ENCODE measurements at regions of chr11 and their contacts with region 1.

Region 1: GRCh38 chr11:105862736-105863367 is 159.2 kb downstream of the MSANTD4 start:
- ATAC-seq: peak; percentile 59 to 82 (median 76)
- H3K4me3 ChIP-seq: no peak overlapping the region
- H3K27ac ChIP-seq: no peak overlapping the region
- H3K4me1 ChIP-seq: peaks cover 0 to 8% of the 10 kb centered on the region in 2 donors

Region 2: DNA sequence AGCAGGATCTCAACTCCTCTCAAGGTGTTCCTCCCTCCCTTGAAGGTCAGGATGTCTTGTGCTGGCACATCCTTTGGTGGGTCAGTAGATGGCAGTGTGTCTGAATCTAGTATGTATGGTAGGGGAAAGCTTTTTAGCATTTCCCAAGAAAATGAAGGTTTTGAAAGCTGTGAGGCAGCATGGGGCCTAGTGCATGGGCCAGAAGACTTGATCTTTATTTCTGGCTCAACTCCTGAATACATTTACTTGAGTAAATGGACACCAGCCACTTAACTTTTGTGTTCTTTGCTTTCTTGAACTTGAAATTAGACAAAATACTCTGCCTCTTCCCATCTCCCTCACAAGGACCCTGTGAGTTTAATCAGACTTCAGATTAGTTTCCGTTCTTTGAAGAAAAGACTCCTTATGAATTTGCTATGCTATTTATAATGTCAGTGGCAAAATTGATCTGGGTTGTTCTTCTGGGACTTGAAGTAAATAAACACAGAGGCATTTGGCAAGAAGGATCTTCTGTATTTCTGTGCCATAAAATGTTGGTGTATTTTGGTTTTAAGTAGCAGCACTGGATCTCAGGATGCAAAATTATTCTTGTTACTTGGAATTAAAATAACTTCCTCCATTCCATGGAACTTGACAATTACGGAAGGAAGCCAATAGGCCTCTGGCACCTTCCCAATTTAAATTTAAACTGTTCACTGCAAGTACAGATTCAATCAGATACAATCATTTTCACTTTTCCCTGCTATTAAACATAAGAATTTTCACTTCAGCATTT is 1253.4 kb before region 1 on chr11:
- in situ Hi-C with region 1: loop called in 1 of 9 experiments (anchors 25 kb)
- ATAC-seq: peak; percentile 63 to 100 (median 88)
- H3K4me3 ChIP-seq: no peak overlapping the region
- H3K27ac ChIP-seq: no peak overlapping the region
- H3K4me1 ChIP-seq: peaks cover 4 to 9% of the 10 kb centered on the region in 2 donors

Region 3: GRCh38 chr11:104968355-104968855 is 894.4 kb before region 1 on chr11 and contains the start of gene CASP4:
- in situ Hi-C with region 1: loop called in 1 of 9 experiments (anchors 25 kb)
- ATAC-seq: peak in 3 of 8 experiments; percentile 83 to 87 (median 84)
- H3K4me3 ChIP-seq: no peak within 1 kb of the TSS
- H3K27ac ChIP-seq: no peak within 1 kb of the TSS
- H3K4me1 ChIP-seq: no peaks in the 10 kb centered on the region
- total RNA-seq, gene CASP4: 0.18 to 104 (median 8.6) TPM in 7 of 8 experiments, not detected in the other

Region 4: GRCh38 chr11:105177658-105178057 is 685.2 kb before region 1 on chr11:
- in situ Hi-C with region 1: no loop called
- ATAC-seq: peak in 2 of 8 experiments; percentile 52 to 61
- H3K4me3 ChIP-seq: no peak overlapping the region
- H3K27ac ChIP-seq: no peak overlapping the region
- H3K4me1 ChIP-seq: no peaks in the 10 kb centered on the region

Region 5: DNA sequence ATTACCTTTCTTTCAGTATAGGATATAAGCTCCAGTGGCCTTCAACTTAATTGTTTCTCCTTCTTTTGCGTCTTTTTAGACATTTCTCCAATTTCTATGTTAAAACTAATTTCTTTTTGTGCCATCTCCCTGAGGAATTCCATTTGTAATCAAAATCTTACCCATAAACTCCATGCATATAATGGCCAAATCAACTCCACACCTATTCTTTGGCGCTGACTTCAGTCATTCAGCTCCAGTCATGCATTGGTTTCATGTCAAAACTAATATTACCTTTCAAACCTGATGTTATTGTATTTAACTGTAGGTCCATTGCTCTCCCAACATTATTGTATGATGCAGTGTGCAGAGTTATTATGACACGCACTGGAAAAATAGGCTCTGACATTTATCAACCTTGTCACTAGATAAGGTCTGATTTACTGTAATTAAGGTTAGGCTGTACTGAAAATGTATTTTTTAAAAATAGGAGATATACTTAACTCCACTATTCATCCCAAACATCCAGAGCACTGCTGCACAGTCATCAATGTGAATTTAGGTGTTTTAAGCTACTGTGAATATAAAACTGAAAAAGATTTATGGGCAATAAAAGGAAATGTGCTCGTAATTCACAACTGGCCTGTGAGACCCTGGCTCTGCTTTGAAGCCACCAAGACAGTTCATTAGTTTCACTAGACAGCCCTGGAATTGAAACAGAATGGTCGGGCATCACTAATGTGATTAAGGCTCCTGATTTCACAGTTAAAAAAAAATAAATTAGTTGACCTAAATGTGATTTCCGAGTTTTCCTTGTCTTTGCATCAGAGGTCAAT is 433.5 kb before region 1 on chr11:
- in situ Hi-C with region 1: no loop called
- ATAC-seq: peak in 5 of 8 experiments; percentile 90 to 95 (median 93)
- H3K4me3 ChIP-seq: no peak overlapping the region
- H3K27ac ChIP-seq: peak overlapping the region in 1 of 2 donors; percentile 15
- H3K4me1 ChIP-seq: peaks cover 11 to 32% of the 10 kb centered on the region in 2 donors

Region 6: GRCh38 chr11:105767931-105768330 is 94.9 kb before region 1 on chr11:
- in situ Hi-C with region 1: no loop called
- ATAC-seq: no peak
- H3K4me3 ChIP-seq: no peak overlapping the region
- H3K27ac ChIP-seq: no peak overlapping the region
- H3K4me1 ChIP-seq: no peaks in the 10 kb centered on the region

Region 7: GRCh38 chr11:105799728-105800462 is 63.0 kb before region 1 on chr11:
- in situ Hi-C with region 1: no loop called
- ATAC-seq: no peak
- H3K4me3 ChIP-seq: no peak overlapping the region
- H3K27ac ChIP-seq: no peak overlapping the region
- H3K4me1 ChIP-seq: no peaks in the 10 kb centered on the region

Measured in motor neuron (in vitro differentiated cells).